Cardiac septum (tissue), 1 donor: ENCODE measurements at regions of chr17 and their contacts with region 1.

Region 1: DNA sequence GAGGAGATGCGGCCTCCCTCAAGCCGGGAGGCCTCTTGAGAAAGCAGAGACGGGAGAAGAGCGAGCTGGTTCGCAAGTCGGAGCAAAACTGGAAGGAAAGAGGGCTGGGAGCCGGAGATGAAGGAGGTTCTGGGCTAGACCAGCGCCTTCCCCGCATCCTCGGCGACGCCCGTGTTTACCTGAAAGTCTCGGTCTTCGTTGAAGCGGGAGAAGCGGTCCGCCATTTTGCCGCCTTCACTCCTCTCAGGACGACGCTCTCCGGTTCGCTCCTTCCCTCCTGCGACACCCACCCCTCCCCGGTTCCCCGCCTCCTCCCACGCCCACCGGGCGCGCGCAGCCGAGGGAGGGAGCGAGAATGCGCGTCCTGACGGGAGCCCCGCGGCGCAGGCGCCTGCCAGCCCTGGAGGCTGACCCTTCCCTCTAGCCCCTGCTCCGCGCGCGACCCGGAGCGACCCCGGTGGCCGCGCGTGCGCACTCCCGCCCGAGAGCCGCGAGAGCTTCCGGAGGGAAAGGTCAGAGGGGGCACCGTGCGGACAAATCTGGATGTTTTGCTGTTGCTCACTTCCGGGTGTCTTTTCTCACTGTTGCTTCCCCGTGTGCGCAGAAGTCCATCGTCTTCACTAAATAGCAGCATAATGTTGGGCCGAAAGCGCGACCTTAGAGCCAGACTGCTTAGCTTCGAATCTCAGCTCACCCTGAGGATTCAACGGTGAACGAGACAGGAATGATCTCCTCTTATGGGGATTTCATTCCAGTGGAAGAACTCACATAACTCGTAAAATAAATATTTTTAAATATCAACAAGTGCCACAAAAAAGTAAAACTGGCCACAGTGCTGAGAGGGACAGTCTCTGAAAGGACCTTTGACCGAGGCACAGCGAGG is at the start of gene GPATCH8:
- DNase-seq: peak; percentile 94
- total RNA-seq, gene GPATCH8: 23.8 TPM

Region 2: DNA sequence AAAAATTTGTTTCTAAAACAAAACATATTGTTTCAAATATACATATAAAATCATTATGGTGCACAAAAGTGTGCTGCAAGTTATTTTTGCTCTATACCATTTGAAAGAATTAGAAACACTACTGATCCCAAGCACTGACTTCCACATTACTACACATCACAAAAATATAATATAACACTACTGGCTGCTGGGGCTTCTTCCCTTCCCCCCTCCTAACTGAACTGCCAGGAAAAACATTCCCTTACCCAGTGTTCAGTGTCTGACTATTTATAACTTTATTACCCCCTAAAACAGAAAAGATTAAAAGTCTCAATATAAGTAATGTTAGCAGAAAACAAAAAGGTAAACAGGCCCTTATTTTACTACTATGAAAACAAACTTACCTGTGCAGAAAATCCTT is 37.0 kb before region 1 on chr17:
- intact Hi-C with region 1: loop called (anchors 5 kb)
- DNase-seq: no peak